ENCODE measurements at regions of chr1 and their contacts with region 1.

Region 1: GRCh38 chr1:113811888-113812660 is at the start of gene RSBN1:
- DNase-seq: peak; percentile 100
- H3K4me3 ChIP-seq: peak within 1 kb of the TSS; percentile 67 to 96 (median 84)
- H3K27ac ChIP-seq: peak within 1 kb of the TSS; percentile 93 to 98 (median 96)
- H3K4me1 ChIP-seq: peaks cover 0 to 33% (median 27%) of the 10 kb centered on the region in 4 donors
- H3K27me3 ChIP-seq: no peaks in the 10 kb centered on the region
- CTCF ChIP-seq: no peak
- EP300 ChIP-seq: peak in 1 of 4 donors; percentile 74
- POLR2A ChIP-seq: peak; percentile 64 to 92
- total RNA-seq, gene RSBN1: 15.5 to 33.9 (median 22.9) TPM

Region 2: DNA sequence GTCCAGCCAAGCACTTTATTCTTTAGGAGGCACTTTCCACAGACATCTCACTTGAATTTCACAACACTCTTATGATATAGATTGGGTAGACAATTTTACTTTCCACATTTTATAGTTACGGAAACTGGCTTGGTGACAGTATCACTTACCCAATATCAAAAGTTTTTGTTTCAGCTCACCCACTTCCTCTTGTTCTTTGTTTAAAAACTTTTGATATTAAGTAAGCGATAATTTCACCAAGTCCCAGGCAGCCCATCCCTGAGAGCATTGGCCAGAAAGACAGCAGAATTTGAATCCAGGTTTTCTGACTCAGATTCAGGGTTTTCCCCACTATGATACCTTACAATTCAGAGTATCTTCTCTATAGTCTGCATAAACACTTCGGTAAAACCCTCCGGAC is 679.0 kb before region 1 on chr1:
- intact Hi-C with region 1: loop called (anchors 10 kb)
- DNase-seq: no peak
- H3K4me3 ChIP-seq: no peak overlapping the region
- H3K27ac ChIP-seq: no peak overlapping the region
- H3K4me1 ChIP-seq: peaks cover 0 to 19% (median 11%) of the 10 kb centered on the region in 4 donors
- H3K27me3 ChIP-seq: no peaks in the 10 kb centered on the region
- CTCF ChIP-seq: no peak
- EP300 ChIP-seq: no peak
- POLR2A ChIP-seq: no peak

Region 3: GRCh38 chr1:113389953-113390834 is 421.9 kb before region 1 on chr1 and contains the start of gene MAGI3:
- intact Hi-C with region 1: loop called (anchors 2 kb)
- DNase-seq: peak; percentile 99
- H3K4me3 ChIP-seq: peak within 1 kb of the TSS; percentile 87 to 98 (median 97)
- H3K27ac ChIP-seq: peak within 1 kb of the TSS; percentile 87 to 94 (median 92)
- H3K4me1 ChIP-seq: peaks cover 0 to 42% (median 25%) of the 10 kb centered on the region in 4 donors
- H3K27me3 ChIP-seq: no peaks in the 10 kb centered on the region
- CTCF ChIP-seq: no peak
- EP300 ChIP-seq: no peak
- POLR2A ChIP-seq: peak; percentile 60 to 77
- total RNA-seq, gene MAGI3: 18.9 to 22.5 (median 21.8) TPM

Region 4: DNA sequence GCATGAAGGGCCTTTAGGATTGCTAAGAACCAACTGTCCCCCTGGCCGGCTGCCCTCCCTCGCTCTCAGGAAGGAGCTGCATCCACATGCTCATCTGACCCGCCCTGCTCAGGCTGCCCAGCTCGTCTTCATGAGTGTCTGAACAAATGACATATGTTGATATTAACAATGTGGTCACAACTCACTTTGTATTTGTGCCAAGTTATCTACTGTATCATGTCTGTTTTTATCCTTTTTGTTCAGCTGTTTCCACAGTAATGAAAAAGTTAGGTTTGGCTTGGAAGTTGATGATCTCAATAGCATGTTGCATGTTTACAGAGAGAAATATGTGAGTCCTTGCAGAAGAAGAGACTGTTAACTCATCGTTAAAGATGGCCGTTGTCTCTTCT is 127.9 kb before region 1 on chr1:
- intact Hi-C with region 1: loop called (anchors 5 kb)
- DNase-seq: peak; percentile 92
- H3K4me3 ChIP-seq: no peak overlapping the region
- H3K27ac ChIP-seq: peak overlapping the region; percentile 42 to 70 (median 64)
- H3K4me1 ChIP-seq: peaks cover 0 to 23% (median 18%) of the 10 kb centered on the region in 4 donors
- H3K27me3 ChIP-seq: no peaks in the 10 kb centered on the region
- CTCF ChIP-seq: no peak
- EP300 ChIP-seq: no peak
- POLR2A ChIP-seq: no peak

Region 5: DNA sequence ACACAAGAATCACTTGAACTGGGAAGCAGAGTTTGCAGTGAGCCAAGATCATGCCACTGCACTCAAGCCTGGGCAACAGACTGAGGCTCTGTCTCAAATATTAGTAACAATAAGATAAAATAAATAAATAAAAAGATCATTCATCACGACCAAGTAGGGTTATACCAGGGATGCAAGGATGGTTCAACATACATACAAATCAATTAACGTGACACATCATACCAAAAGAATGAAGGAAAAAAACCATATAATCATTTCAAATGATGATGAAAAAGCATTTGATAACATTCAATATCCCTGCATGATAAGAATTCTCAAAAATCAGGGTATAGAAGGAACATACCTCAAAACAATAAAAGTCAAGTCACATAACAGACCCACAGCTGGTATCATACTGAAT is 91.1 kb before region 1 on chr1:
- intact Hi-C with region 1: no loop called
- DNase-seq: no peak
- H3K4me3 ChIP-seq: no peak overlapping the region
- H3K27ac ChIP-seq: no peak overlapping the region
- H3K4me1 ChIP-seq: no peaks in the 10 kb centered on the region
- H3K27me3 ChIP-seq: no peaks in the 10 kb centered on the region
- CTCF ChIP-seq: no peak
- EP300 ChIP-seq: no peak
- POLR2A ChIP-seq: no peak

Region 6: DNA sequence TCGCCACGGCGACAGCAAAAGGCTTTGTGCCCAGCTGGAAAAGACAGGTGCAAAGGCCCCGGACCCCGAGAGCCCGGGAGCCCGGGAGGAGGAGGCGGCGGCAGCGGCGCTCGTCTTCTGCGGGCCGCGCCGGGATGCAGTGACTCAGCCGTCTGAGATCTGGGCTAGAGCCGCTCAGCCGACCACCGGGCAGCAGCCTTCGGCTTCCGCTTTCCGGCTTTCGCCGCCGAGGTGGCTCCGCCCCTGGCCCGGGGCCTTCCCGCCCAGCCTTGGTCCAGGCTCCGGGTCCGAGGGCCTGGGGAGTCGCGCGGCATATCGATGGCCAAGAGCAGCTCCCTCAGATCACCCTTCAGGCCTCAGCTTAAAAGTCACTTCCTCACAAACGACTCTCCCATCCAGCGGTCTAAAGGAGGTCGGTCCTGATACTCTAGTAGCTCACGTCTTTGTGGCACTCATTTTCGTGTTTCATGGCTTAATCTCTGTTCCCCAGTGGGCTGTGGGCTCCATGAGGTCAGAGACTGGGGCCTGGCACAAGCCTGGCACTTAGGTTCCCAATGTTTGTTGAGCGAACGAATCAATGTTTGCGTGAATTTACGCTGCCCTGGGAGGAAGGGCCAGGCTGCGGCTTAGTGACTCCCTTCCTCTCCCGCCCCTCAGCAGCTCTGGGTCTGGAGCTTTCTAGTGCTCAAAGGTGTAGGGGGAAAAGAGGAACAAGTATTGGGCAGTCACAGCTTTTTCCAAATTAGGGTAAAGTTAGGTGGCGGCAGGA is 52.6 kb before region 1 on chr1 and contains the start of gene PHTF1:
- intact Hi-C with region 1: loop called (anchors 2 kb)
- DNase-seq: peak; percentile 84
- H3K4me3 ChIP-seq: peak within 1 kb of the TSS; percentile 69 to 97 (median 85)
- H3K27ac ChIP-seq: peak within 1 kb of the TSS; percentile 93 to 95 (median 94)
- H3K4me1 ChIP-seq: peaks cover 0 to 46% (median 24%) of the 10 kb centered on the region in 4 donors
- H3K27me3 ChIP-seq: no peaks in the 10 kb centered on the region
- CTCF ChIP-seq: no peak
- EP300 ChIP-seq: no peak
- POLR2A ChIP-seq: peak; percentile 5 to 54
- total RNA-seq, gene PHTF1: 11.9 to 22.7 (median 14.4) TPM

Region 7: DNA sequence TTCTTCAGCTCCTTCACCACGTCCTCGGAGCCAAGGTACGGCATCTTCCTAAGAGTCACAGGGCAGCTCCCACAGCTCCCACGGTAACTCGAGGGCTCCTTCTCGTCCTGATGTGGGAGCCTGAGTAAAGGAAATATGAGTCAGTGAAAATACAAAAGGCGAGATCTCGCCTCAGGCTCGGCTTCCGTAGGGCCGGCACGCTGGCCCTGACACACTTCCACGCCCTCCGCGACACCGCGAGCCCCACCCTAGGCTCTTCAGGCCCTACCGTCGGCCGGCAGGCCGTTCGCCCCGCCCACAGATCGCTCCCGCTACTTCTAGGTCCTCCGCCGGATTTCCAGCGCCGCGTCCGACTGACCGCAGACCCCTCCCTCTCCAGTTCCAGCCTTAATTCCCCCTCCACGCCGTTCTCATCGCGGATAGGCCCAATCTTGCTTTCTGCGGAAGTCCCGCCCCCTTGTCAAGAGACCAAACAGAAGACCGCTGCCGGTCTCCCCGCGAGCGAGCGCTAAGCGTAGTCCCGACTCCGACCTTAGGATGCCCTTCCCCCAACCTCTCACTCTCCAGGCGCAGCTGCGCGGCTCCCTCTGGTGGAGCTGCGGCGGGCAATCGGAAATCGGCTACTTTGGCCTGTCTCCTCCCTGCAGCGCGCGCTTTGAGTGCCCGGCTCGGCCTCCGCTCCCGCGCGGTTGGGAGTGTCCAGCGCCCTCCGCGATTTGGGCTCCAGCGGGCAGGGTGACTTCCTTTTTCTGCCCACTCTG is 92.8 kb after region 1 on chr1 and contains the starts of genes AP4B1 and DCLRE1B:
- intact Hi-C with region 1: loop called (anchors 2 kb)
- DNase-seq: peak; percentile 100
- H3K4me3 ChIP-seq: peak within 1 kb of the TSS; percentile 67 to 81 (median 73)
- H3K27ac ChIP-seq: peak within 1 kb of the TSS; percentile 87 to 95 (median 92)
- H3K4me1 ChIP-seq: peaks cover 0 to 23% (median 21%) of the 10 kb centered on the region in 4 donors
- H3K27me3 ChIP-seq: no peaks in the 10 kb centered on the region
- CTCF ChIP-seq: peak; percentile 64 to 82 (median 77)
- EP300 ChIP-seq: peak in 2 of 4 donors; percentile 30 to 51
- POLR2A ChIP-seq: peak; percentile 55 to 74
- total RNA-seq, gene AP4B1: 6.2 to 15.5 (median 10.8) TPM
- total RNA-seq, gene DCLRE1B: 4.3 to 4.9 (median 4.4) TPM

Region 8: DNA sequence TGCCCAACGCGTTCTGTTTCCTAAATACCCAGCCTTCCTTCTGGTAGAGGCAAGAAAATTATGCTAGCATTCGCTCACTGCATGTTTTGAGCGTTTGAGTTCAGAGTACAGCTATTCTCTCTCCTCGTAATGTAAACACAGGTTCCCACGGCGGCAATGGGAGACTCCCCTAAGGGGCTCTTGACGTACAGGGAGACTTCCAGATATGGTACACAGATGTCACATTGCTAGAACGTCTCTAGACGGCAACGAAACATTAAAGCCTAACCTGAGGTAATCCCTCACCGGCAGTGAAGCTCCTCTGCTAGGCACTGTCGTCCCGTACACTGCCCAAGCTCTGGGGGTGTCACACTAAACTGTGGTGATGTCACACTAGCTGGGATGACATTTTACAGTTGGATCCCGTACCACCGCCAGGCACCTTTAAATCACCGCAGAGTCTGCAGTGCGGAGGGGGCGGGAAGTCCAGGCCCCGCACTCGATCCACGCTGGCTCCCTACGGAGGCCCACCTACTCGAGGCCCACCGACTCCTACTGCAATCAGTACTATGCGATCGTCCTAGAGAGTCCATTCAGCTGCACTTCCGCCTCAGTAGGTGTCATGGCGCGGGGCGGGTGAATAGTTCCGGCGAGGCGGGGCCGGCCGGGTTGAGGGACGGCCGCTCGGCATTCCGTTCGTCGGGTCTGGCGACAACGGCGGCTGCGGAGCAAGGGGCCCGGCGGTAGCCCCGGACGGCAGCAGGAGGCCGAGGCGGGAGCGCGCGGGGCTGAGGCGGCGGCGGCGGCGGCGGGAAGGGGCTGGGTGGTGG is 117.1 kb after region 1 on chr1 and contains the start of gene HIPK1:
- intact Hi-C with region 1: loop called (anchors 1 kb)
- DNase-seq: peak; percentile 95
- H3K4me3 ChIP-seq: peak within 1 kb of the TSS; percentile 70 to 92 (median 85)
- H3K27ac ChIP-seq: peak within 1 kb of the TSS; percentile 94 to 99 (median 97)
- H3K4me1 ChIP-seq: peaks cover 0 to 51% (median 39%) of the 10 kb centered on the region in 4 donors
- H3K27me3 ChIP-seq: no peaks in the 10 kb centered on the region
- CTCF ChIP-seq: peak in 1 of 4 experiments; percentile 17
- EP300 ChIP-seq: no peak
- POLR2A ChIP-seq: peak; percentile 45 to 63
- total RNA-seq, gene HIPK1: 47.2 to 57.1 (median 49.9) TPM

Measured in sigmoid colon (tissue), 7 donors.